Esophagus squamous epithelium (tissue), 5 donors: ENCODE measurements at regions of chr17 and their contacts with region 1.

Region 1: GRCh38 chr17:30104575-30105339 is 11.9 kb upstream of the NSRP1 start:
- DNase-seq: no peak
- H3K4me3 ChIP-seq: peak overlapping the region in 3 of 4 donors; percentile 33 to 52 (median 37)
- H3K27ac ChIP-seq: peak overlapping the region in 1 of 4 donors; percentile 27
- H3K4me1 ChIP-seq: peaks cover 3 to 11% (median 3%) of the 10 kb centered on the region in 3 donors
- H3K27me3 ChIP-seq: no peaks in the 10 kb centered on the region
- CTCF ChIP-seq: peak; percentile 76 to 87 (median 84)
- POLR2A ChIP-seq: no peak

Region 2: DNA sequence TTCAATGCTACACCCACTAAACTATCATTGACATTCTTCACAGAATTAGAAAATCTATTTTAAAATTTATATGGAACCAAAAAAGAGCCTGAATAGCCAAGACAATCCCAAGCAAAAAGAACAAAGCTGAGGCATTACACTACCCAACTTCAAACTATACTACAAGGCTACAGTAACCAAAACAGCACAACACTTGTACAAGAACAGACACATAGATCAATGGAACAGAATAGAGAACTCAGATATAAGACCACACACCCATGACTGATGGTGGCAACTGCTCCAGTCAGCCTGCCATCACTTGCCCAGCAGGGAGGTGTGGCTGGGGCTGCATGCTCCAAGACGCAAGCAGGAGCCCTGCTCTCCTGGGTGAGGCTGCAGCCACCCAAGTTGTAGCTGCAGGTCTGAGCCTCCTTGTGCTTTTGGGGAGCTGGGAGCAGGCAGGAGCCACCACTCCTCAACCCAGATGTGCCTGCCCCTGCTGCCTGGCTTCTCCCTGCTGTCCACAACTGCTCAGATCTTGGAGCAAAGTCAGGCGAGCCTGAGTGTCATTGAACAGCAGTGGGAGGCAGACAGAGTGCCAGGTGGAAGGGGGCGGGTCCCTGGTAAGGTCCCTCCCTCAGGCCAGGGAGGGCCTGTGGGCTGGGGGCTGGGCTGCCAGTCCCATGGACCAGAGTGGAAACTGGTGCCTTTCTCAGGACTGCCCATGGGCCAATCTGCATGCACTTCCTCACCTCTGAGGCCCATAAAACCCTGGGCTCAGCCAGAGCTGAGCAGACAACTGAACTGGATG is 199.5 kb before region 1 on chr17:
- intact Hi-C with region 1: no loop called
- DNase-seq: no peak
- H3K4me3 ChIP-seq: no peak overlapping the region
- H3K27ac ChIP-seq: no peak overlapping the region
- H3K4me1 ChIP-seq: peaks cover 0 to 5% (median 0%) of the 10 kb centered on the region in 3 donors
- H3K27me3 ChIP-seq: no peaks in the 10 kb centered on the region
- CTCF ChIP-seq: no peak
- POLR2A ChIP-seq: no peak

Region 3: GRCh38 chr17:30041551-30041950 is 63.2 kb before region 1 on chr17:
- intact Hi-C with region 1: no loop called
- DNase-seq: no peak
- H3K4me3 ChIP-seq: no peak overlapping the region
- H3K27ac ChIP-seq: no peak overlapping the region
- H3K4me1 ChIP-seq: no peaks in the 10 kb centered on the region
- H3K27me3 ChIP-seq: peaks cover 0 to 18% (median 0%) of the 10 kb centered on the region in 4 donors
- CTCF ChIP-seq: no peak
- POLR2A ChIP-seq: no peak

Region 4: DNA sequence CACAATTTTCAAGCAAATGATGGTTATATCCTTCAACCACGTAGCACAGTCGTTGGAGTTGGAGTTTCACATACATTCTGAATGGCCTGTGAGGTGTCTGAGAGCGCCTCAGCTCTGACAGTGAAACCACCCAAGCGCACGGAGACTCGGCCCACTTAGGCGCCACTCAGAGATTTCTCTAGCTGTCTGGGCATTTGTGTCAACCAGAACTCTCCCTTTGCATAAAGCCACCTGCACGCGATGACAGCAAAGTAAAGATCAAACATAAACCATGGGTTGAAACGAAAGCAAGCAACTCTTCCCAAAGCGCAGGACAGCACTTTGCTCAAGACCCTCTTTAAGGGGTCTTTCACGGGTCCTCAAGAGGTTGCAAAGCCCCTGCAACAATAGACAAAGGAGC is 130.2 kb after region 1 on chr17:
- intact Hi-C with region 1: loop called (anchors 5 kb)
- DNase-seq: no peak
- H3K4me3 ChIP-seq: peak overlapping the region; percentile 42 to 61 (median 58)
- H3K27ac ChIP-seq: peak overlapping the region in 2 of 4 donors; percentile 60 to 71
- H3K4me1 ChIP-seq: peaks cover 16 to 69% (median 26%) of the 10 kb centered on the region in 3 donors
- H3K27me3 ChIP-seq: peaks cover 0 to 63% (median 2%) of the 10 kb centered on the region in 4 donors
- CTCF ChIP-seq: no peak
- POLR2A ChIP-seq: no peak